ENCODE measurements at regions of chrX and their contacts with region 1.

Region 1: DNA sequence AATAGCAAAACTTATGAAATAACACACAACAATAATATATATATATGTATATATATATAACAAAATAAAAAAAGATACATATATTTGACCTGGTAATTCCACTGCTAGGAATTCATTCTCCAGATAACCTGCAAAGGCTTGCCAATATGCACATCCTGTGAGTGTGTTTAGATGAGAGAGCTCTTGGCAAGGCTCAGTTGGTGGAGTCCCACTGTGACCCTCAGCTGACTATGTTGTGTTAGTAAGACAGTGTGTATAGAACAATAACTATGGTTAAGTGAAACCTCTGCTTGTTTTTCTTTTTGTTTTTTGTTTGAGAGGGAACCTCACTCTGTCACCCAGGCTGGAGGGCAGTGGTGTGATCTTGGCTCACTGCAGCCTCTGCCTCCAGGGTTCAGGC is 39.5 kb upstream of the RBMX start:
- DNase-seq: no peak
- H3K4me3 ChIP-seq: no peak overlapping the region
- H3K27ac ChIP-seq: no peak overlapping the region
- H3K4me1 ChIP-seq: peaks cover 3% of the 10 kb centered on the region
- CTCF ChIP-seq: no peak

Region 2: DNA sequence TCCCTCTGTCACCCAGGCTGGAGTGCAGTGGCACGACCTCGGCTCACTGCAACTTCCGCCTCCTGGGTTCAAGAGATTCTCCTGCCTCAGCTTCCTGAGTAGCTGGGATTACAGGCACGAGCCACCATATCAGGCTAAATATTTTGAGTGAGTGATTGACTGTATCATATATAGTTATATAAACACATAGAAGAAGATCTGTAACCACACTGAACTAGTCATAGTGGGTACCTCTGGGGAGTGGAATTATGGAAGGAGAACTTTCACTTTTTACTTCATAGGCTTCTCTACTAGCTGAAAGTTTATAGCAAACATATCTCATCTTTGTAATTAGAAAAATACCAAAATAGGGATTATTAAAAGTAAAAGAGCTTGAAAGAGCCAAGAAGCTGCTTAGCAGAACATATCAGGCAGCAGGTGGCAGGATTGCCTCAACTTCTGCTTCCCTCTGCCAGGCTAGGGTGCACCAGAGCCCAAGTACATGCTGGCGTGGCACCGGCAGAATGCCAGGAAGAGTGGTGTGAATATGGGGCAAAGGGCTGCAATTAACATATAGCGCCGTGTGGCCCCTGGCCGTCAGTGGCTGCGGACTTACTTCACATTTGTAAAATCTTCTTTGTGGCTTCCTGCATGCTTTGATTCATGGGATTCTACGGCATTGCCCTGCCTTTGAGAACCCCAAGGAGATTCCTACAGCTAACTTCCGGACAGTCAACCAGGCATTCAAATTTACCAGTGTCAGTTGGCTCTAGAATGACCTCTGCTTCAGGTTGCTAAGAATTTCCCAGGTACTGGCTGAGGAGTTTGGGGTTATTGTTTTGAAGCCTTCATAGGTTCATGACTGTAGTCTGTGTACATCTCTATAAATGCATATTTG is 311.5 kb before region 1 on chrX:
- CTCF ChIA-PET with region 1: no interaction called
- POLR2A ChIA-PET with region 1: no interaction called
- intact Hi-C with region 1: loop called (anchors 2 kb)
- DNase-seq: peak; percentile 21
- H3K4me3 ChIP-seq: no peak overlapping the region
- H3K27ac ChIP-seq: no peak overlapping the region
- H3K4me1 ChIP-seq: no peaks in the 10 kb centered on the region
- CTCF ChIP-seq: peak; percentile 60

Region 3: GRCh38 chrX:136711147-136711546 is 208.9 kb before region 1 on chrX:
- CTCF ChIA-PET with region 1: no interaction called
- POLR2A ChIA-PET with region 1: no interaction called
- intact Hi-C with region 1: loop called (anchors 1 kb)
- DNase-seq: peak; percentile 7
- H3K4me3 ChIP-seq: no peak overlapping the region
- H3K27ac ChIP-seq: no peak overlapping the region
- H3K4me1 ChIP-seq: peaks cover 26% of the 10 kb centered on the region
- CTCF ChIP-seq: peak; percentile 57

Region 4: GRCh38 chrX:136975684-136976470 is 55.9 kb after region 1 on chrX:
- CTCF ChIA-PET with region 1: no interaction called
- POLR2A ChIA-PET with region 1: no interaction called
- intact Hi-C with region 1: no loop called
- DNase-seq: no peak
- H3K4me3 ChIP-seq: no peak overlapping the region
- H3K27ac ChIP-seq: no peak overlapping the region
- H3K4me1 ChIP-seq: no peaks in the 10 kb centered on the region
- CTCF ChIP-seq: no peak